ENCODE measurements at regions of chr16 and their contacts with region 1.

Region 1: DNA sequence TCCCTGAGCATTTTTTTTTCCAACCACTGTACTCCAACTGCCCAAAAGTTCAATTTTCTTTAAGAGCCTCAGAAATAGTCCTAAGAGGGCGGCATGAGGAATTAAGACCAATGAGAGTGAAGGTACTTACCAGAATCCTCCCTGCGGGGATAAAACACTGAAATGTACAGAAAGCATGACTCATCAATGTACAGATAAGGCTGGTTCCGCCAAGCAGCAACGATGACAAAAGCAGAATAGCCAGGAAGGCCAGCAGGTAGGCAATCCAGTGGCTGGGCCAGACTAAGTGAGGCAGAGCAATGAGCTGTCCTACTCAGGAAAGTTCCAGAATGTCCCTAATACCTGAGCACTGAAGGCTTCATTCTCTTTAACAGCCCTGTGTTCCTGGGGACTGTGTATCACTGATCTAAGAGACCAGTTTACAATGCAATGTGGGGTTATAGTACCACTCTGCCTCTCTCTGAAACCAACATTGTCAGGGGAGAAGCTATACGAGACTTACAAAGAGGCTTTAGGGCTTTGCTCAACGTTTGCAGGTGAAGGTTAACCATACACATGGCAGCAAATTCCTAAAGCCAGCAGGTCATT is 11.0 kb upstream of the GPR139 start:
- DNase-seq: no peak
- H3K4me3 ChIP-seq: no peak overlapping the region
- H3K27ac ChIP-seq: no peak overlapping the region
- H3K4me1 ChIP-seq: no peaks in the 10 kb centered on the region
- H3K27me3 ChIP-seq: no peaks in the 10 kb centered on the region
- CTCF ChIP-seq: no peak
- EP300 ChIP-seq: no peak
- POLR2A ChIP-seq: no peak

Region 2: GRCh38 chr16:19980632-19981265 is 104.0 kb before region 1 on chr16:
- in situ Hi-C with region 1: loop called in 1 of 4 experiments (anchors 25 kb)
- intact Hi-C with region 1: no loop called
- DNase-seq: no peak
- H3K4me3 ChIP-seq: no peak overlapping the region
- H3K27ac ChIP-seq: no peak overlapping the region
- H3K4me1 ChIP-seq: no peaks in the 10 kb centered on the region
- H3K27me3 ChIP-seq: no peaks in the 10 kb centered on the region
- CTCF ChIP-seq: peak; percentile 16 to 27 (median 23)
- EP300 ChIP-seq: no peak
- POLR2A ChIP-seq: no peak

Region 3: GRCh38 chr16:20216591-20217217 is 132.0 kb after region 1 on chr16:
- in situ Hi-C with region 1: loop called in 1 of 4 experiments (anchors 25 kb)
- intact Hi-C with region 1: no loop called
- DNase-seq: no peak
- H3K4me3 ChIP-seq: no peak overlapping the region
- H3K27ac ChIP-seq: no peak overlapping the region
- H3K4me1 ChIP-seq: no peaks in the 10 kb centered on the region
- H3K27me3 ChIP-seq: no peaks in the 10 kb centered on the region
- CTCF ChIP-seq: no peak
- EP300 ChIP-seq: no peak
- POLR2A ChIP-seq: no peak

Measured in transverse colon (tissue), 4 donors.